Mammary epithelial cell (primary cell): ENCODE measurements at regions of chr5 and their contacts with region 1.

Region 1: GRCh38 chr5:167945542-167946384 is 345.7 kb upstream of the WWC1 start:
- DNase-seq: peak; percentile 78
- H3K4me3 ChIP-seq: no peak overlapping the region
- H3K27ac ChIP-seq: peak overlapping the region; percentile 80
- H3K4me1 ChIP-seq: peaks cover 66% of the 10 kb centered on the region
- H3K27me3 ChIP-seq: no peaks in the 10 kb centered on the region
- CTCF ChIP-seq: no peak

Region 2: GRCh38 chr5:167587772-167588437 is 357.9 kb before region 1 on chr5:
- CTCF ChIA-PET with region 1: no interaction called
- dilution Hi-C with region 1: no loop called
- in situ Hi-C with region 1: no loop called
- intact Hi-C with region 1: loop called (anchors 5 kb)
- DNase-seq: peak; percentile 30
- H3K4me3 ChIP-seq: no peak overlapping the region
- H3K27ac ChIP-seq: no peak overlapping the region
- H3K4me1 ChIP-seq: no peaks in the 10 kb centered on the region
- H3K27me3 ChIP-seq: no peaks in the 10 kb centered on the region
- CTCF ChIP-seq: peak; percentile 48 to 67

Region 3: DNA sequence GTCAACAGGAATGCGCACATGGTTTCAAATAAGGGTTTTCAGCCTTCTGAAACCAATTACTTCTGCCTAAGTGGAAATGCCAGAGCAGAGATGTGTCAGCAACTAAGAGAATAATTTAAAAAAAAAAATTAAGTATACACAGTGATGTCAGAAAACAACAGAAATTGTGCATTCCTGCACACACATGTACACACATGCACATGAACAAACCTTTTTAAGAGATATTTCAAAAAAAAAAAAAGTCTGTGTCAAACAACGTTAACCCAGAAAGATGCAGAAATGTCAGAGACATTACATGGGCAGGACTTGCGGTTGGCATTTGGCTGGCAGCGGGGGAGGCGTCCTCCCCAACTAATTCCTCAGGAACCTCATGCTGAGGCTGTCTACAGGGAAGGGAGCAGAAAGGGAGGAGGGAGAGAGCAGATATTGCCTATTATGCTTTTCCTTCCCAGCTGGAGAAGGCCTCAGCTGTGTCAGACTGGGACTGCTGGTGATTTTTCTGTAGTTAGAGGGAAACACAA is 191.2 kb before region 1 on chr5:
- CTCF ChIA-PET with region 1: no interaction called
- dilution Hi-C with region 1: no loop called
- in situ Hi-C with region 1: no loop called
- intact Hi-C with region 1: loop called (anchors 10 kb)
- DNase-seq: no peak
- H3K4me3 ChIP-seq: no peak overlapping the region
- H3K27ac ChIP-seq: no peak overlapping the region
- H3K4me1 ChIP-seq: peaks cover 15% of the 10 kb centered on the region
- H3K27me3 ChIP-seq: no peaks in the 10 kb centered on the region
- CTCF ChIP-seq: no peak

Region 4: DNA sequence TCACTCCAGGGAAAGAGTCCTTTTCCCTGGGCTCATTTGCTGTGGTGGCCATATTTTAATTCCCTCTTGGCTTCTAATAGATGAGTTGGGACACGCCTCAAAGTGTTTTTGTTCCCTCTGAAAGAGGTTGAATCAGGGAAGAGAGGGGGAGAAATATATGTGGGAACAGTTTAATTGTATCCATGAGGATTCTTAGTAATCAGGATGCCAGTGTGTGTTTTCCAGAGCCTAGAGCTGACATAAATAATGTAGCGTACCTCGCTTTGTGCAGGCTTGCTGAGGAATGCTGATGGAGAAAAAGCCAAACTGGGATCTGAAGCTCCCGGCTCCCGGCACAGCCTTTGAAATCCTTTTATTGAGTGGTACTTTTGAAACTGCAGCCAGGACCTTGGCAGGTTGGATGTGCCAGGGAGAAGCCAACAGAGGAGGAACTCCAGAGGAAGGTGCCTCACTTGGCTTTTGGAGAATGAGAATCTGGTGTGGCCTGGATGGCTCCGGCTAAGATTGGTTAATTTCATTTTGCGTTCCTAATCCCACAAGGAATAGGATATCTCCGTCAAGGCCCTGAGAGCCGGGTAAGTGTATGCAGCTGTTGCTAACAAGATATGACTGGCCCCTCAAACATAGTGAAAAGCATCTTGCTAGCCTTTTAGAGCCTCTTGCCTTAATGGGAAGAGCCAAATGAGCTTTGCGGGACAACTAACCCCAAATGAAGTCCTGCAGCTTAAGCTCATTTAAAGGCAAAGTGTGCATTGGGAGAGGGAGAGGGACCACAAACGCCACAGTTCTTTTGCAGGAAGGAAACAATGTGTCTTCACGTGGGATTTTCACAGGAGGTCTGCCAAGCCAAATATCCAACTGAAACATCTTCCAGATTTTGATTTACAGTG is 125.4 kb before region 1 on chr5:
- CTCF ChIA-PET with region 1: no interaction called
- dilution Hi-C with region 1: no loop called
- in situ Hi-C with region 1: loop called in 1 of 2 experiments (anchors 10 kb)
- intact Hi-C with region 1: loop called (anchors 2 kb)
- DNase-seq: peak; percentile 7
- H3K4me3 ChIP-seq: peak overlapping the region; percentile 30 to 66 (median 61)
- H3K27ac ChIP-seq: peak overlapping the region; percentile 87
- H3K4me1 ChIP-seq: peaks cover 43% of the 10 kb centered on the region
- H3K27me3 ChIP-seq: no peaks in the 10 kb centered on the region
- CTCF ChIP-seq: no peak

Region 5: DNA sequence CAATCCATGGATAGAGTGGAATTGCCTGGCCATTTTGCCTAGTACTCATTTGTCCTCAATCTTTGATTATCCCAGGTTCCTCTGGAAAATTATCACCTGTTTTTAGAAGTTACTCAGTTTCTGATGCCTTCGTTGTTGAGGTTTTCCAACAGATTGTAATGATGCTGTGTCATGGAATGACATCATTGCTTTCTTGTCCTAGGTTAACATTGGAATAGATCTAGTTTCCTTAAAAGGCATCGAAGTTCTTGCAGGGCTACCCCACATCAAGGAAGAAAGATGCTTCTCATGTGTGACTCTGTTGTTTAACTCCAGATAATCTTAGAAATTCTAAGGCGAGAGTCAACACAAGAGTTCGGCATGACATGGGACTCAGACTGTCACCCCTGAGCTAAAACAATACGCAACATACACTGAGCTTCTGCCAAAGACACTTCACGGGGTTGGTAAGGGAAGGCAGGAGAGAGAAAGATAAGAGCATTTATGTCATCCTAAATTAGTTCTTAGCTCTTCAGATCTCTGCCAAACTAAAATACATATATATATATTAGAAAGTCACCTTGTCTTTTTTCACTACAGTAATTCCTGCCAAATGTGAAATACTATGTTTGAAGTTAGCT is 52.5 kb after region 1 on chr5:
- CTCF ChIA-PET with region 1: no interaction called
- dilution Hi-C with region 1: no loop called
- in situ Hi-C with region 1: no loop called
- intact Hi-C with region 1: loop called (anchors 5 kb)
- DNase-seq: no peak
- H3K4me3 ChIP-seq: no peak overlapping the region
- H3K27ac ChIP-seq: no peak overlapping the region
- H3K4me1 ChIP-seq: peaks cover 24% of the 10 kb centered on the region
- H3K27me3 ChIP-seq: no peaks in the 10 kb centered on the region
- CTCF ChIP-seq: no peak

Region 6: GRCh38 chr5:168114444-168115017 is 168.8 kb after region 1 on chr5:
- CTCF ChIA-PET with region 1: interaction called, 13 read pairs
- dilution Hi-C with region 1: no loop called
- in situ Hi-C with region 1: no loop called
- intact Hi-C with region 1: no loop called
- DNase-seq: peak; percentile 37
- H3K4me3 ChIP-seq: no peak overlapping the region
- H3K27ac ChIP-seq: no peak overlapping the region
- H3K4me1 ChIP-seq: no peaks in the 10 kb centered on the region
- H3K27me3 ChIP-seq: no peaks in the 10 kb centered on the region
- CTCF ChIP-seq: peak; percentile 66 to 92